ENCODE measurements at regions of chr2 and their contacts with region 1.

Region 1: GRCh38 chr2:219597552-219598307 is at the start of gene STK11IP:
- DNase-seq: peak; percentile 84
- ATAC-seq: peak; percentile 96
- H3K4me3 ChIP-seq: peak within 1 kb of the TSS; percentile 74
- H3K27ac ChIP-seq: peak within 1 kb of the TSS; percentile 81
- H3K4me1 ChIP-seq: 0 out of 2 replicates have a peak, but pooled peaks cover 8% of the 10 kb centered on the region
- H3K27me3 ChIP-seq: no peaks in the 10 kb centered on the region
- CTCF ChIP-seq: no peak
- EP300 ChIP-seq: no peak
- POLR2A ChIP-seq: peak; percentile 97
- RAD21 ChIP-seq: no peak
- polyA plus RNA-seq, gene STK11IP: 0.42 to 1.6 TPM

Region 2: GRCh38 chr2:219388127-219388844 is 209.4 kb before region 1 on chr2:
- CTCF ChIA-PET with region 1: interaction called, 3 read pairs
- POLR2A ChIA-PET with region 1: interaction called, 10 read pairs
- RAD21 ChIA-PET with region 1: interaction called, 4 read pairs
- SMC1A ChIA-PET with region 1: no interaction called
- in situ Hi-C with region 1: no loop called
- intact Hi-C with region 1: no loop called
- DNase-seq: peak; percentile 83
- ATAC-seq: peak; percentile 86
- H3K4me3 ChIP-seq: peak overlapping the region; percentile 8; the same call in 1 of the 2 replicates
- H3K27ac ChIP-seq: no peak overlapping the region
- H3K4me1 ChIP-seq: peaks cover 5% of the 10 kb centered on the region
- H3K27me3 ChIP-seq: no peaks in the 10 kb centered on the region
- CTCF ChIP-seq: peak; percentile 48 to 67 (median 63); a peak in 5 of 6 replicates
- EP300 ChIP-seq: no peak
- POLR2A ChIP-seq: no peak
- RAD21 ChIP-seq: no peak

Region 3: GRCh38 chr2:219619235-219619634 is 21.5 kb after region 1 on chr2:
- CTCF ChIA-PET with region 1: no interaction called
- POLR2A ChIA-PET with region 1: no interaction called
- RAD21 ChIA-PET with region 1: no interaction called
- SMC1A ChIA-PET with region 1: no interaction called
- in situ Hi-C with region 1: no loop called
- intact Hi-C with region 1: no loop called
- DNase-seq: no peak
- ATAC-seq: no peak
- H3K4me3 ChIP-seq: no peak overlapping the region
- H3K27ac ChIP-seq: no peak overlapping the region
- H3K4me1 ChIP-seq: no peaks in the 10 kb centered on the region
- H3K27me3 ChIP-seq: no peaks in the 10 kb centered on the region; a peak in 1 of 4 replicates
- CTCF ChIP-seq: no peak
- EP300 ChIP-seq: no peak
- POLR2A ChIP-seq: no peak
- RAD21 ChIP-seq: no peak

Region 4: GRCh38 chr2:219689676-219690628 is 92.2 kb after region 1 on chr2:
- CTCF ChIA-PET with region 1: interaction called, 10 read pairs
- POLR2A ChIA-PET with region 1: no interaction called
- RAD21 ChIA-PET with region 1: no interaction called
- SMC1A ChIA-PET with region 1: interaction called, 3 read pairs
- in situ Hi-C with region 1: no loop called
- intact Hi-C with region 1: no loop called
- DNase-seq: peak; percentile 23
- ATAC-seq: peak; percentile 62
- H3K4me3 ChIP-seq: no peak overlapping the region
- H3K27ac ChIP-seq: no peak overlapping the region
- H3K4me1 ChIP-seq: peaks cover under 1% of the 10 kb centered on the region; the same call in 1 of the 2 replicates
- H3K27me3 ChIP-seq: peaks cover 0 to 2% of the 10 kb centered on the region in 2 experiments; a peak in 1 of 4 replicates
- CTCF ChIP-seq: peak; percentile 63 to 77 (median 66)
- EP300 ChIP-seq: no peak
- POLR2A ChIP-seq: no peak
- RAD21 ChIP-seq: peak; percentile 69

Measured in GM12878 (cell line).